Activated CD8-positive, alpha-beta T cell treated with anti-CD3 and anti-CD28 coated beads for 36 hours (primary cell): ENCODE measurements at regions of chr9 and their contacts with region 1.

Region 1: GRCh38 chr9:37465249-37466036 is at the start of gene ZBTB5:
- DNase-seq: peak; percentile 100
- ATAC-seq: peak; percentile 79
- H3K4me3 Mint-ChIP-seq: peak within 1 kb of the TSS; percentile 97
- H3K27ac Mint-ChIP-seq: peak within 1 kb of the TSS; percentile 98
- H3K4me1 Mint-ChIP-seq: peaks cover 31% of the 10 kb centered on the region
- H3K27me3 Mint-ChIP-seq: no peaks in the 10 kb centered on the region
- CTCF ChIP-seq: no peak
- total RNA-seq, gene ZBTB5: 8.6 to 8.8 TPM

Region 2: GRCh38 chr9:37415011-37415719 is 50.3 kb before region 1 on chr9:
- CTCF ChIA-PET with region 1: no interaction called
- POLR2A ChIA-PET with region 1: interaction called, 6 read pairs
- intact Hi-C with region 1: loop called (anchors 10 kb)
- DNase-seq: peak; percentile 88
- ATAC-seq: peak; percentile 90
- H3K4me3 Mint-ChIP-seq: no peak overlapping the region
- H3K27ac Mint-ChIP-seq: no peak overlapping the region
- H3K4me1 Mint-ChIP-seq: peaks cover 14% of the 10 kb centered on the region
- H3K27me3 Mint-ChIP-seq: no peaks in the 10 kb centered on the region
- CTCF ChIP-seq: peak; percentile 82